ENCODE measurements at regions of chr7 and their contacts with region 1.

Region 1: DNA sequence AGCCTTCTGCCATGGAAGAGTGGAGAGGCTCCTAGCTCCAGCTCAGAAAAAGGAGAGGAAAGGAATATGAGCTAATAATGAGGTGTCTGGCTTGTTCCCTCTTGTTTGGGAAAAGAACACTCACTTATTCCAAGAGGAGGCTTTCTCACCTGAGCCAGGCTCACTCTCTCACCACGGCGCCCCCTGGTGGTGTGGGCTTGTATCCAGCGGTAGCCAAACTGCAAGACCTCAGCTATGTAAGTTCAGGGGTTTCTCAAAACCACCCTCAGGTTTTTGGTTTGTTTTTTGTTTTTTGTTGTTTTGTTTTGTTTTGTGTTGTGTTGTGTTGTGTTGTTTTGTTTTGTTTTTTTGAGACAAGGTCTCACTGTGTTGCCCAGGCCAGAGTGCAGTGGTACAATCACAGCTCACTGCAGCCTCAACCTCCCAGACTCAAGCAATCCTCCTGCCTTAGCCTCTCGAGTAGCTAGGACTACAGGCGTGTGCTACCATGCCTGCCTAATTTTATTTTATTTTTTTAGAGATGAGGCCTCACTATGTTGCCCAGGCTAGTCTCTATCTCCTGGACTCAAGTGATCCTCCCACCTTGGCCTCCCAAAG is 124.0 kb downstream of the TMEM130 start:
- DNase-seq: peak; percentile 81
- H3K4me3 Mint-ChIP-seq: no peak overlapping the region
- H3K27ac Mint-ChIP-seq: no peak overlapping the region
- H3K4me1 Mint-ChIP-seq: no peaks in the 10 kb centered on the region
- H3K27me3 Mint-ChIP-seq: peaks cover 22% of the 10 kb centered on the region
- CTCF ChIP-seq: peak; percentile 72

Region 2: DNA sequence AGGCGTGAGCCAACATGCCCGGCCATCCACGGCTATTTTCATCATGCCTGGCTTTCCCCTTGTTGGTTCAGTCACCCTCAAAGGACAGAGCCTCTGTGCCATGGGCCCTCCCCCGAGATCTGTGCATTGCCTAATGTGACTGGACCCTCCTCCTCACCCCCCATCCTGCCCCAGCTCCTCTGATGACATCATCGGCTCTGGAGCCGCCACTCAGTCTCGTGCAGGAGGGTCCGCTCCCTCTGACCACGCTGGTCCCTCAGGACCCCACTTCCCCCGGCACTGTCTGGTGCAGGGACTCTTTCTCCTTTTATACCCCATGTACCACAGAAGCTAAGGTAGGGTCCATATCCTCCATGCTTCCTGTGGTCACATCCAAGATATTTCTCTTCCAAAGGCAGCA is 311.7 kb before region 1 on chr7:
- CTCF ChIA-PET with region 1: interaction called, 83 read pairs
- POLR2A ChIA-PET with region 1: no interaction called
- intact Hi-C with region 1: loop called (anchors 1 kb)
- DNase-seq: no peak
- H3K4me3 Mint-ChIP-seq: no peak overlapping the region
- H3K27ac Mint-ChIP-seq: no peak overlapping the region
- H3K4me1 Mint-ChIP-seq: peaks cover 6% of the 10 kb centered on the region
- H3K27me3 Mint-ChIP-seq: peaks cover 17% of the 10 kb centered on the region
- CTCF ChIP-seq: no peak

Region 3: DNA sequence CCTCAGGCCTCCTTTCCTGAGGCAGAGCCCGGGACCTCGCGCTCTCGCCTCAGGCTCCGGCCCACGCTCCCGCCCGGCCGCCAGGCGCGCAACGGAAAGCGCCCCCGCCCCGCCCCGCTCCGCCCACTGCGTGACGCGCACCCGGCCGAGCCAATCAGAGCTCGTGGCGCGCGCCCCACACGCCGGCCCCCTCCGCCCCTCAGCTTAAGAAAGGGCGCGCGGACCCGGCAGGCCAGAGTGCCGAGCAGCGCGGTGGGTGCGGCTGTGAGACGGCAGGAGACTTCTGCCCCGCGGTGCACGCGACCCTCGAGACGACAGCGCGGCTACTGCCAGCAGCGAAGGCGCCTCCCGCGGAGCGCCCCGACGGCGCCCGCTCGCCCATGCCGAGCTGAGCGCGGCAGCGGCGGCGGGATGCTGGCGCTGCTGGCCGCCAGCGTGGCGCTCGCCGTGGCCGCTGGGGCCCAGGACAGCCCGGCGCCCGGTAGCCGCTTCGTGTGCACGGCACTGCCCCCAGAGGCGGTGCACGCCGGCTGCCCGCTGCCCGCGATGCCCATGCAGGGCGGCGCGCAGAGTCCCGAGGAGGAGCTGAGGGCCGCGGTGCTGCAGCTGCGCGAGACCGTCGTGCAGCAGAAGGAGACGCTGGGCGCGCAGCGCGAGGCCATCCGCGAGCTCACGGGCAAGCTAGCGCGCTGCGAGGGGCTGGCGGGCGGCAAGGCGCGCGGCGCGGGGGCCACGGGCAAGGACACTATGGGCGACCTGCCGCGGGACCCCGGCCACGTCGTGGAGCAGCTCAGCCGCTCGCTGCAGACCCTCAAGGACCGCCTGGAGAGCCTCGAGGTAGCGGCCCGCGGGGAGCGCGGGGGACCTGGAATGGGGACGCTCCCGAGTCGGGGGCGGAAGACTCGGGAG is 128.5 kb before region 1 on chr7 and contains the start of gene NPTX2:
- CTCF ChIA-PET with region 1: no interaction called
- POLR2A ChIA-PET with region 1: no interaction called
- intact Hi-C with region 1: loop called (anchors 10 kb)
- DNase-seq: no peak
- H3K4me3 Mint-ChIP-seq: no peak within 1 kb of the TSS
- H3K27ac Mint-ChIP-seq: no peak within 1 kb of the TSS
- H3K4me1 Mint-ChIP-seq: no peaks in the 10 kb centered on the region
- H3K27me3 Mint-ChIP-seq: peaks cover 29% of the 10 kb centered on the region
- CTCF ChIP-seq: no peak
- total RNA-seq, gene NPTX2: not detected in 2 replicates

Region 4: GRCh38 chr7:98698976-98699375 is 46.8 kb before region 1 on chr7:
- CTCF ChIA-PET with region 1: interaction called, 10 read pairs
- POLR2A ChIA-PET with region 1: no interaction called
- intact Hi-C with region 1: no loop called
- DNase-seq: no peak
- H3K4me3 Mint-ChIP-seq: no peak overlapping the region
- H3K27ac Mint-ChIP-seq: no peak overlapping the region
- H3K4me1 Mint-ChIP-seq: no peaks in the 10 kb centered on the region
- H3K27me3 Mint-ChIP-seq: peaks cover 29% of the 10 kb centered on the region
- CTCF ChIP-seq: no peak

Region 5: DNA sequence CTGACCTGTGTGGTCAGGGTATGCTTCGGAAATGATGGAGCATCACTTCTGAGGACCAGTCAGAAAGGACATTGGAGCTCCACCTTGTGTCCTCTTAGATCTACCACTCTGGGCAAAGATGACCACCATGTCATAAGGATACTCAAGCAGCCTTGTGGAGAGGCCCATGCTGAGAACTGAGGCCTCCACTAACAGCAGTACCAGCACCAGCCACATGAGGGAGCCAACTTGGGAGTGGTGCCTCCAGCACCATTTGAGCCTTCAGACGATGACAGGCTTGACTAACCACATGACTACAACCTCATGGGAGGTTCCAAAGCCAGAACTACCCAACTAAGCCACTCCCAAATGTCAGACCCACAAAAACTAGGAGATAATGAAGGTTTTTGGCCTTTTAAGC is 12.8 kb before region 1 on chr7:
- CTCF ChIA-PET with region 1: interaction called, 26 read pairs
- POLR2A ChIA-PET with region 1: no interaction called
- intact Hi-C with region 1: no loop called
- DNase-seq: peak; percentile 61
- H3K4me3 Mint-ChIP-seq: no peak overlapping the region
- H3K27ac Mint-ChIP-seq: no peak overlapping the region
- H3K4me1 Mint-ChIP-seq: no peaks in the 10 kb centered on the region
- H3K27me3 Mint-ChIP-seq: peaks cover 35% of the 10 kb centered on the region
- CTCF ChIP-seq: peak; percentile 43

Region 6: DNA sequence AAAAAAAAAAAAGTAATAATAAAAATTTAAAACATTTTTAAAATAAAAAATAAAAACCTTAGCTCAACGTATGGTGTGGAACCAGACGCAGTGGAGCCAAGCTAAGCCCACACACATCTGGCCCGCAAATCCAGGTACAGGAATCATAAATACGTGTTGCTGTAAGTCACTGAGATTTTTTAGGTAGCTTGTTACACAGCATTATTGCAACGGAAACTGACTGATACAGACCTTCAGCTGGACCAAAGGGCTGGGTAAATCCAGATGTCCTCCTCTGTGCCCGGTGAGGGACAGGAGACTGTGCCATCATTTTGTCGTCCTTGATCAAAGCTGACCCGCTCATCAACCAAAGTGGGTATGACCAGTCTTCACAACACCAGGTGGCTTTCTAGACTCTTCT is 19.1 kb after region 1 on chr7:
- CTCF ChIA-PET with region 1: interaction called, 16 read pairs
- POLR2A ChIA-PET with region 1: no interaction called
- intact Hi-C with region 1: no loop called
- DNase-seq: no peak
- H3K4me3 Mint-ChIP-seq: no peak overlapping the region
- H3K27ac Mint-ChIP-seq: no peak overlapping the region
- H3K4me1 Mint-ChIP-seq: no peaks in the 10 kb centered on the region
- H3K27me3 Mint-ChIP-seq: peaks cover 13% of the 10 kb centered on the region
- CTCF ChIP-seq: no peak

Region 7: DNA sequence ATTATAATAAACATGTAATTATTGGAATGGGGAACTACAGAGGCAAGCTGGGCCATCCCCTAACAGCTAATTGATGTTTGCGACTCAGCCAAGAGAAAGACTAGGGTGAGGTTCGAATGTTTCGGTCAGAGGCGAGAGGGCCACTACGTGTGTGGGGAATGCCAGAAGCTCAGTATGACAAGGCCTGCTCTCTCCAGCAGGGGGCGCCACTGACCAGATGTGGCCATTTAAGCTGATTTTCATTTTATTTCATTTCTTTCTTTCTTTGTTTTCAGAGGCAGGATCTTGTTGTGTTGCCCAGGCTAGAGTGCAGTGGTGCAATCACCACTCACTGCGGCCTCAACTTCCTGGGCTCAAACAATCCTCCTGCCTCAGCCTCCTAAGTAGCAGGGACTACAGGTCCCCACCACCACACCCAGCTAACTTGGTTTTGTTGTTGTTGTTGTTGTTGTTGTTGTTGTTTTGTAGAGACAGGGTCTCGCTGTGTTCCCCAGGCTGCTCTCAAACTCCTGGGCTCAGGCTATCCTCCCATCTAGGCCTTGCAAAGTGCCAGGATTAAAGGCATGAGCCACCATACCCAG is 85.9 kb after region 1 on chr7:
- CTCF ChIA-PET with region 1: interaction called, 13 read pairs
- POLR2A ChIA-PET with region 1: no interaction called
- intact Hi-C with region 1: no loop called
- DNase-seq: peak; percentile 35
- H3K4me3 Mint-ChIP-seq: no peak overlapping the region
- H3K27ac Mint-ChIP-seq: no peak overlapping the region
- H3K4me1 Mint-ChIP-seq: peaks cover 2% of the 10 kb centered on the region
- H3K27me3 Mint-ChIP-seq: no peaks in the 10 kb centered on the region
- CTCF ChIP-seq: peak; percentile 67

Region 8: GRCh38 chr7:99340659-99341058 is 594.8 kb after region 1 on chr7:
- CTCF ChIA-PET with region 1: no interaction called
- POLR2A ChIA-PET with region 1: no interaction called
- intact Hi-C with region 1: no loop called
- DNase-seq: no peak
- H3K4me3 Mint-ChIP-seq: no peak overlapping the region
- H3K27ac Mint-ChIP-seq: no peak overlapping the region
- H3K4me1 Mint-ChIP-seq: no peaks in the 10 kb centered on the region
- H3K27me3 Mint-ChIP-seq: no peaks in the 10 kb centered on the region
- CTCF ChIP-seq: no peak